Cardiac septum (tissue), 1 donor: ENCODE measurements at regions of chr13 and their contacts with region 1.

Region 1: GRCh38 chr13:98842864-98843481 is 90.5 kb upstream of the SLC15A1 start:
- DNase-seq: peak; percentile 86

Region 2: DNA sequence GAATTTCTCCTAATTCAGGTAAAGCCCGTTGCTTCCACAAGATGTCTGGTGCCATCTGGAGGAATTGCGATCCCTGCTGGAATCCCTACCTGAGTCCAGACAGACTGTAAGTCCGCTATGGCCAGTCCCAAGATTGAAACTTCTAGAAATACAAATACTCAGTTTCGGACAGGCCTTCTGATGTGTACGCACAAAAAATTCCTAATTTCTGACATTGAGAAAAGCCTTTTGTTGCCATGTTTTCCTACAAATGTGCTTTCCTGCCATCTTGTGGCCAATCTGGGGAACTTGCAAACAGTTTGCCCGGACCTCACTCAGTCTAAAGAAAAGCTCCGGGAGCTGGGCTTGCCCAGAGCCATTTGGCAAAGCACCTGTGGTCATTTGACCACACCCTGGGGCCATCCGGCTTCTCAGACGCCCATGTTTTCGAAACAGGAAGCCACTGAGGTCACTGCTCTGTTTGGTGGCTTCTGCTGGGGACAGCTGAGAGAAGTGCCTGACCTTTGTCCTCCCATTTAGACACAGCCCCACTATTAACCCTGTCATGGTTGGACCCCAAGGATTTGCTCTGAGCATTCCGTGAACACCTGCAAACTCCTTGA is 169.9 kb before region 1 on chr13:
- intact Hi-C with region 1: loop called (anchors 5 kb)
- DNase-seq: peak; percentile 80

Region 3: GRCh38 chr13:99033814-99034213 is 190.8 kb after region 1 on chr13:
- intact Hi-C with region 1: loop called (anchors 5 kb)
- DNase-seq: no peak